ENCODE measurements at regions of chr2 and their contacts with region 1.

Region 1: GRCh38 chr2:184906709-184907108 is 308.4 kb downstream of the ZNF804A start:
- DNase-seq: no peak
- H3K4me3 ChIP-seq: no peak overlapping the region
- H3K27ac ChIP-seq: no peak overlapping the region
- H3K4me1 ChIP-seq: peaks cover 34% of the 10 kb centered on the region
- H3K27me3 ChIP-seq: no peaks in the 10 kb centered on the region
- CTCF ChIP-seq: no peak

Region 2: GRCh38 chr2:184646177-184646576 is 260.5 kb before region 1 on chr2:
- CTCF ChIA-PET with region 1: no interaction called
- POLR2A ChIA-PET with region 1: no interaction called
- intact Hi-C with region 1: loop called (anchors 10 kb)
- DNase-seq: no peak
- H3K4me3 ChIP-seq: no peak overlapping the region
- H3K27ac ChIP-seq: no peak overlapping the region
- H3K4me1 ChIP-seq: peaks cover 9% of the 10 kb centered on the region
- H3K27me3 ChIP-seq: no peaks in the 10 kb centered on the region
- CTCF ChIP-seq: no peak

Region 3: DNA sequence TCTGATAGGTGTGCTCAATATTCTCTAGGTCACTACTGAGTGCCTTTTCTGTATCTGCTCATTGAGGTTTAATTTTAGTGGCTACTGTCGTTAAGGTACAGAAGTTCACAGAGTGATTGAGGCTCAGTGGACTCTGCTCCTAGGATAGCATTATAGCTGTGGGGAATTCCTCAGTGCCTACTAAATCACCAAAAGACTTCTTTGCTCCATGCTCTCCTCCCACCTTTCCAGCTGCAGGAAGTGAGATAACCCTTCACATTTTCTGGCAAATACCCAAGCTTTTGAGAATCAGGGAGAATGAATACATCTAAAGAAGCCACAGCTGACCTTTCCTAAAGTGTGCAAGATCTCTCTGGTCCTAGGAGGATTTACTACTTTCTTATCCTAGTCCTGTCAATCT is 736.7 kb after region 1 on chr2:
- CTCF ChIA-PET with region 1: no interaction called
- POLR2A ChIA-PET with region 1: no interaction called
- intact Hi-C with region 1: no loop called
- DNase-seq: no peak
- H3K4me3 ChIP-seq: no peak overlapping the region
- H3K27ac ChIP-seq: no peak overlapping the region
- H3K4me1 ChIP-seq: no peaks in the 10 kb centered on the region
- H3K27me3 ChIP-seq: no peaks in the 10 kb centered on the region
- CTCF ChIP-seq: no peak

Measured in A673 (cell line).